Panc1 (cell line): ENCODE measurements at regions of chr2 and their contacts with region 1.

Region 1: GRCh38 chr2:234881413-234882241 is 70.2 kb upstream of the SH3BP4 start:
- DNase-seq: peak; percentile 87
- ATAC-seq: peak; percentile 89
- H3K4me3 ChIP-seq: 0 out of 4 replicates have a peak overlapping the region, but pooled peaks of 1 of the 2 experiments have one; percentile 10
- H3K27ac ChIP-seq: peak overlapping the region; percentile 93
- H3K4me1 ChIP-seq: peaks cover 36% of the 10 kb centered on the region
- H3K27me3 ChIP-seq: no peaks in the 10 kb centered on the region
- CTCF ChIP-seq: peak; percentile 88

Region 2: GRCh38 chr2:234550511-234551107 is 331.0 kb before region 1 on chr2:
- CTCF ChIA-PET with region 1: no interaction called
- POLR2A ChIA-PET with region 1: no interaction called
- in situ Hi-C with region 1: no loop called
- intact Hi-C with region 1: loop called (anchors 10 kb)
- DNase-seq: peak; percentile 79
- ATAC-seq: peak; percentile 94
- H3K4me3 ChIP-seq: no peak overlapping the region
- H3K27ac ChIP-seq: peak overlapping the region; percentile 70
- H3K4me1 ChIP-seq: peaks cover 13% of the 10 kb centered on the region
- H3K27me3 ChIP-seq: no peaks in the 10 kb centered on the region
- CTCF ChIP-seq: peak; percentile 97

Region 3: DNA sequence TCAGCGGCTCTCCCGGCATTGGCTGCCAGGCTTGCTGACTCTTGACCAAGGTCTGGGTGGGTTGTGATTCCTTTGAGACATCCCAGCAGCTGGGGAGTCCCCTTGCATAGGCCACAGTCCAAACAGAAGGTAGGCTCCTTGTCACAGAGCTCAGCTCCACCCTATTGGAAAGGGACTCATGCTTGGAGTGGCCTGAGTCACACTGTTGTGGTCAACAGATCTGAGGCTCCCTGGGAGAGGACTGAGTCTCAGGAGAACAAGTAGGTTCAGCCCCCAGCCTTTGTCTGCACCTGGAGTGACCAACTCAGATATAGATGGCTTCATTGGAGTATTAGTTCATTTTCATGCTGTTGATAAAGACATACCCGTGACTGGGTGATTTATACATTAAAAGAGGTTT is 38.1 kb after region 1 on chr2:
- CTCF ChIA-PET with region 1: interaction called, 10 read pairs
- POLR2A ChIA-PET with region 1: no interaction called
- in situ Hi-C with region 1: no loop called
- intact Hi-C with region 1: no loop called
- DNase-seq: no peak
- ATAC-seq: no peak
- H3K4me3 ChIP-seq: no peak overlapping the region
- H3K27ac ChIP-seq: no peak overlapping the region
- H3K4me1 ChIP-seq: no peaks in the 10 kb centered on the region
- H3K27me3 ChIP-seq: no peaks in the 10 kb centered on the region
- CTCF ChIP-seq: no peak

Region 4: GRCh38 chr2:235098736-235099494 is 217.3 kb after region 1 on chr2:
- CTCF ChIA-PET with region 1: no interaction called
- POLR2A ChIA-PET with region 1: no interaction called
- in situ Hi-C with region 1: loop called (anchors 10 kb)
- intact Hi-C with region 1: no loop called
- DNase-seq: no peak
- ATAC-seq: peak; percentile 84
- H3K4me3 ChIP-seq: no peak overlapping the region
- H3K27ac ChIP-seq: peak overlapping the region; percentile 60
- H3K4me1 ChIP-seq: peaks cover 20% of the 10 kb centered on the region
- H3K27me3 ChIP-seq: no peaks in the 10 kb centered on the region
- CTCF ChIP-seq: no peak

Region 5: GRCh38 chr2:235116885-235117492 is 235.4 kb after region 1 on chr2:
- CTCF ChIA-PET with region 1: interaction called, 5 read pairs
- POLR2A ChIA-PET with region 1: interaction called, 10 read pairs
- in situ Hi-C with region 1: no loop called
- intact Hi-C with region 1: no loop called
- DNase-seq: peak; percentile 25
- ATAC-seq: no peak; the same call in 1 of the 2 replicates
- H3K4me3 ChIP-seq: no peak overlapping the region
- H3K27ac ChIP-seq: peak overlapping the region; percentile 25; the same call in 1 of the 2 replicates
- H3K4me1 ChIP-seq: peaks cover 5% of the 10 kb centered on the region; the same call in 1 of the 2 replicates
- H3K27me3 ChIP-seq: no peaks in the 10 kb centered on the region
- CTCF ChIP-seq: peak; percentile 71; the same call in 1 of the 2 replicates